ENCODE measurements at regions of chr6 and their contacts with region 1.

Region 1: GRCh38 chr6:73739096-73739495 is 43.1 kb downstream of the CD109 start:
- DNase-seq: peak in 7 of 9 donors; percentile 31 to 69 (median 57)
- ATAC-seq: peak; percentile 76
- H3K4me3 ChIP-seq: no peak overlapping the region
- H3K4me3 Mint-ChIP-seq: no peak overlapping the region
- H3K27ac ChIP-seq: no peak overlapping the region
- H3K27ac Mint-ChIP-seq: no peak overlapping the region
- H3K4me1 ChIP-seq: no peaks in the 10 kb centered on the region
- H3K4me1 Mint-ChIP-seq: peaks cover 0 to 4% (median 0%) of the 10 kb centered on the region in 7 donors
- H3K27me3 ChIP-seq: no peaks in the 10 kb centered on the region
- H3K27me3 Mint-ChIP-seq: peaks cover 0 to 4% (median 0%) of the 10 kb centered on the region in 5 donors

Region 2: GRCh38 chr6:73854998-73855718 is 116.1 kb after region 1 on chr6:
- CTCF ChIA-PET with region 1: interaction called, 3 read pairs
- POLR2A ChIA-PET with region 1: no interaction called
- intact Hi-C with region 1: loop called (anchors 1 kb)
- DNase-seq: peak in 6 of 9 donors; percentile 2 to 43 (median 26)
- ATAC-seq: peak; percentile 66
- H3K4me3 ChIP-seq: no peak overlapping the region
- H3K4me3 Mint-ChIP-seq: no peak overlapping the region
- H3K27ac ChIP-seq: no peak overlapping the region
- H3K27ac Mint-ChIP-seq: no peak overlapping the region
- H3K4me1 ChIP-seq: no peaks in the 10 kb centered on the region
- H3K4me1 Mint-ChIP-seq: peaks cover 0 to 2% (median 0%) of the 10 kb centered on the region in 7 donors
- H3K27me3 ChIP-seq: no peaks in the 10 kb centered on the region
- H3K27me3 Mint-ChIP-seq: peaks cover 0 to under 1% (median 0%) of the 10 kb centered on the region in 5 donors

Measured in naive thymus-derived CD4-positive, alpha-beta T cell (primary cell).